Panc1 (cell line): ENCODE measurements at regions of chr7 and their contacts with region 1.

Region 1: DNA sequence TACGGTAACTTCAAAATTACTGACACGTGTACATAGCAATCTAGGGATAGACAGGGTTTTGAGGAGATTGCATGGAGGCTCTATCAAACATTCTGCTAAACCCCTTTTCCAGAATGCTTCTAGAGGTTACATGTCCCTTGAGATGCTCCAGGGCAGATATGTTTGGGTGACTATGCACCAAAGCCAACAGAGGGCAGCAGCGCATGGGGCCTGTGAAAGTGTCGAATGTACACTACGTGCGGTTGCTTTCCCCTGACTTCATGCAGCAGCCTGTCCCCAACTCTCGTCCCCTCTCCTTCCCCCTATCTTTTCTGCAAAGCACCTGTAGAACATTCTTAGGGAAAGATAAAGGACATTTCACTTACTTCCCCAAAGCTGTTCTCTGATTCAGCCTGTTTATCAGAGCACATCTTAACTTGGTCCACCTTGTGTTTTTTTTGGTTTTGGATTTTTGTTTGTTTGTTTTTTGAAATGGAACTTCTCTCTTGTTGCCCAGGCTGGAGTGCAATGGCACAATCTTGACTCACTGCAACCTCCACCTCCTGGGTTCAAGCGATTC is 90.2 kb downstream of the UBE3C start:
- DNase-seq: no peak
- ATAC-seq: peak; percentile 88
- H3K4me3 ChIP-seq: no peak overlapping the region
- H3K27ac ChIP-seq: no peak overlapping the region
- H3K4me1 ChIP-seq: no peaks in the 10 kb centered on the region
- H3K27me3 ChIP-seq: no peaks in the 10 kb centered on the region
- CTCF ChIP-seq: peak; percentile 79

Region 2: DNA sequence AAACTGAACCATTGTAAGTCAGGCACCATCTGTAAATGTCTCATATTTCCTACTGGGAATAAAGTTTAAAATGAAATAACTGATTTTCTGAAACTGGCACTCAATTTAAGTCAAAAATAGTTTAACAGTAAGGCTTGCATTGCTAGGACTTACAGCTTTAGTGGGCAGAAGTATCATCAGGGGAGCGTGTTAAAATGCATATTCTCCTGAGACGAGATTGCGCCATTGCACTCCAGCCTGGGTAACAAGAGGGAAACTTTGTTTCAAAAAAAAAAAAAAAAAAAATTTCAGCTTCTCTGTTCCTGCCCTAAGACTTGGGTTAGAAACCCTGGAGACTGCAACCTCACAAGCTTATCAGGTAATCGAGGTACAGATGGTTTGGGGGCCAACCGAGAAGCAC is 24.8 kb before region 1 on chr7:
- CTCF ChIA-PET with region 1: no interaction called
- POLR2A ChIA-PET with region 1: no interaction called
- in situ Hi-C with region 1: no loop called
- intact Hi-C with region 1: no loop called
- DNase-seq: no peak
- ATAC-seq: no peak
- H3K4me3 ChIP-seq: no peak overlapping the region
- H3K27ac ChIP-seq: no peak overlapping the region
- H3K4me1 ChIP-seq: no peaks in the 10 kb centered on the region
- H3K27me3 ChIP-seq: no peaks in the 10 kb centered on the region
- CTCF ChIP-seq: no peak

Region 3: DNA sequence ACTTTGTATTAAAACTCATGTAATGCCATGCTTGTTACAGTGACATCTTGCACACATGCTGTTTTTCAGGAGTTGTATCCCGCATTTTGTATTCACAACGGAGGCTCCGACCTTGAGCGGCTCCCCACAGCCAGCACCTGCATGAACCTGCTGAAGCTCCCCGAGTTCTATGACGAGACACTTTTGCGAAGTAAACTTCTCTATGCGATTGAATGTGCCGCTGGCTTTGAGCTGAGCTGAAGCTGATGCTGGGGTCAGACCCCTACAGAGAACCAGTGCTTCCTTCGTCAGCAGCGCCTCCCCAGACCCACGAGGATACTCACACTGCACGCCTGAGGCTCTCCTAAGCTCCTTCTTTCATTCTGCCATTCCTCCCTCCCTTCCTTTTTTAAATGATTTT is 38.6 kb after region 1 on chr7:
- CTCF ChIA-PET with region 1: interaction called, 3 read pairs
- POLR2A ChIA-PET with region 1: interaction called, 12 read pairs
- in situ Hi-C with region 1: no loop called
- intact Hi-C with region 1: no loop called
- DNase-seq: no peak
- ATAC-seq: no peak
- H3K4me3 ChIP-seq: no peak overlapping the region
- H3K27ac ChIP-seq: no peak overlapping the region
- H3K4me1 ChIP-seq: peaks cover 5% of the 10 kb centered on the region; the same call in 1 of the 2 replicates
- H3K27me3 ChIP-seq: no peaks in the 10 kb centered on the region
- CTCF ChIP-seq: no peak